Dendritic cell treated with granulocyte-macrophage colony-stimulating factor and Interleukin-4, amounts not matched to agents 40 ng/mL and 50 ng/mL, for 4 days (primary cell): ENCODE measurements at regions of chr11 and their contacts with region 1.

Region 1: GRCh38 chr11:110000031-110000502 is 93.1 kb upstream of the ZC3H12C start:
- H3K4me3 Mint-ChIP-seq: no peak overlapping the region
- H3K27ac Mint-ChIP-seq: no peak overlapping the region
- H3K4me1 Mint-ChIP-seq: peaks cover 20% of the 10 kb centered on the region
- H3K27me3 Mint-ChIP-seq: no peaks in the 10 kb centered on the region

Region 2: GRCh38 chr11:109926941-109927340 is 73.1 kb before region 1 on chr11:
- intact Hi-C with region 1: no loop called
- H3K4me3 Mint-ChIP-seq: no peak overlapping the region
- H3K27ac Mint-ChIP-seq: no peak overlapping the region
- H3K4me1 Mint-ChIP-seq: no peaks in the 10 kb centered on the region
- H3K27me3 Mint-ChIP-seq: no peaks in the 10 kb centered on the region

Region 3: DNA sequence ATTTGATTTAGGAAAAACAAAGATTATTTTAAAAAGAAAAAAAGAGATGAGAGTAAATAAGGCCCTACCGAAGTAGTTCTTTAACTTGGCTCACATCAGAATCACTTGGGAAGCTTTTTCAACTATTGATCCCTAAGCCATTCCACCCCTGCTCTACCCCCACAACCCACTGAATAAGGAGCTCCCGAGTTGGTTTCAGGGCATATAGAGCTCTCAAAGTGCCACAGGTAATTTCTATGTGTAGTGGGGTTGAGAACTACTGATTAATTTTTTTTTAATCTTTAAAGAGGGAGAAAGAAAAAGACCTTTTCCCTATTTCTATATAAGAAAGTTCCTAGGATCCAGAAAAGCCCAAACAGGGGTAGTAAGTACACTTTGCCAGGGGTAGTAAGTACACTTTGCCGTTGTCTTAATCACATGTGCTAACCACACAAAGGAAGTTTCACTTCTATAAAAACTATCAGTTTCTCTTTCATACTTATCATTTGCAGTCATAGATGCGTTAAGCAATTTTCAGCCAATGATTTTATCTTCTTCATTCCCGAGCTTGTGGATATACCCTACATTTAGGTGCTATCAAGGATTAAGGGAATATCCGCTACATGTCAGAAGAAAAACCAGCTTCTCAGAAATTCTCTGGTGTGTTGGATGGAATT is 15.3 kb before region 1 on chr11:
- intact Hi-C with region 1: loop called (anchors 1 kb)
- H3K4me3 Mint-ChIP-seq: peak overlapping the region; percentile 11
- H3K27ac Mint-ChIP-seq: no peak overlapping the region
- H3K4me1 Mint-ChIP-seq: peaks cover 20% of the 10 kb centered on the region
- H3K27me3 Mint-ChIP-seq: no peaks in the 10 kb centered on the region

Region 4: GRCh38 chr11:110026858-110027626 is 27.0 kb after region 1 on chr11:
- intact Hi-C with region 1: loop called (anchors 2 kb)
- H3K4me3 Mint-ChIP-seq: no peak overlapping the region
- H3K27ac Mint-ChIP-seq: peak overlapping the region; percentile 64
- H3K4me1 Mint-ChIP-seq: peaks cover 17% of the 10 kb centered on the region
- H3K27me3 Mint-ChIP-seq: peaks cover 3% of the 10 kb centered on the region

Region 5: DNA sequence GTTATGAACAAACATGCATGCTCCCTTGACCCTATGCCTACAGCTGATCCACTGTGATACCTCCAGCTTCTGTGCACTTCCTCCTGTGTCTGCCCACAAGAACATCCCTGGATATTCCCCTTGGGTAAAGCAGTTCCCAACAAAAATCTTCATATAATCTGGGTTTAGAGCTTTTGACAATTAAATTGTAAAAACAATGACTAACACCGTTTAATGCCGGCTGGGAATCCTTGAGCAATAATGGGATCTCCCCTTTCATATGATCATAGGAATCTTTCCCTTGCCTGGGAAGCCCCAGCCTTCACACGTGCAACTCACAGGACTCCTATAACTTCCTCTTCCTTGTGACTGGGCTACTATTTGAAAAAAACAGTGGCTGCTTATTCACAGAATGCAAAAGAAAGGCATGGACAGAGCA is 86.8 kb after region 1 on chr11:
- intact Hi-C with region 1: loop called (anchors 2 kb)
- H3K4me3 Mint-ChIP-seq: no peak overlapping the region
- H3K27ac Mint-ChIP-seq: peak overlapping the region; percentile 83
- H3K4me1 Mint-ChIP-seq: peaks cover 2% of the 10 kb centered on the region
- H3K27me3 Mint-ChIP-seq: peaks cover 10% of the 10 kb centered on the region

Region 6: DNA sequence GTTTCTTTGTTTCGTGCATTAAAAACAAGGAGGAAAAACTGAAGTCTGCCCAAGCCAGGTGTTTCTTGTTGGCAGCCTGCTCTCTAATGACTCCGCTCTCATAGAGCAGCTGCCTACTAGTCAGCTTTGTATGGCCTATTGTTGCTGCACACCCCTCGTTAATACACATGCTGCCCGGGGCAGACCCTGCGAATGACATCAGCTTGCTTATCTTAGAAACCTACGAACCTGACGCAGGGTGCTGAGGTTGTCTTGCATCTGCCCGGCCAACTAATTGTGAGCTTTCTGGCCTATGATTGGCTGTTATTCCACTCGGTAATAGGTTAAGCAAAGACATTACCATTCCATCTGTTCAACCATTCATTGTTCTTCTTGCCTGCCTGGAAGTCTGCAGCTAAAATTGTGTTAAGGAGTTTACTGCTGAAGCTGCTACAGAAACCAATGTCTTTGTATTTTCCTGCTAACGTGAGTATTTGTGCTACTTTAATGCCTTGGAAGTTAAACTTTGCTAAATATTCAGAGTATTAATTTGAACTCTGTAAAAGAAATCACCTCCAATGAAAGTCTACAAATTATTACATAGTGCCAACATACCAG is 130.7 kb after region 1 on chr11:
- intact Hi-C with region 1: no loop called
- H3K4me3 Mint-ChIP-seq: no peak overlapping the region
- H3K27ac Mint-ChIP-seq: no peak overlapping the region
- H3K4me1 Mint-ChIP-seq: no peaks in the 10 kb centered on the region
- H3K27me3 Mint-ChIP-seq: no peaks in the 10 kb centered on the region